Left ventricle myocardium superior (tissue), 1 donor: ENCODE measurements at regions of chr1 and their contacts with region 1.

Region 1: DNA sequence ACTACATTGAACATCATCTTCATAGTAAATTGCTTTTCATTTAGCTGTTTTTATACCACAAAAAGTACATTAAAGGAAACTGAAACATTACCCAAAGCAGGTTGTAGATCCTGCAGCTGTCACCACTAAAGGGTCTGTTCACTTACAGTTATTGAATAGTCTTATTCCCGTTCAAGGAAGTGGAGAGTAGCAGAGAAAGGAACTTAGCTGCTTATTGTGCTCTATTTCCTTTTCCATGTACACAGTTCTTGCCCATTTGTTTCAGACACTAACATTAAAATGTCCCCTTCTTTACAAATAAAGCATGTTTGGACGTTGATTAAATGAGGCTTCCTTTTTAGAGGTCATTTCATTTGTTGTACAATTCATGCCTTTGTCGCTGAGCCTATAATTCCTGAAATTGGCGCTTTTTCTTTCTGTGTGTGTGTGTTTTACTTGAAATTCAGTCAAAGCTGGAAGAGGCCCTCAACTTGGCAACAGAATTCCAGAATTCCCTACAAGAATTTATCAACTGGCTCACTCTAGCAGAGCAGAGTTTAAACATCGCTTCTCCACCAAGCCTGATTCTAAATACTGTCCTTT is 44.4 kb upstream of the BMP8A start:
- DNase-seq: no peak
- ATAC-seq: no peak

Region 2: DNA sequence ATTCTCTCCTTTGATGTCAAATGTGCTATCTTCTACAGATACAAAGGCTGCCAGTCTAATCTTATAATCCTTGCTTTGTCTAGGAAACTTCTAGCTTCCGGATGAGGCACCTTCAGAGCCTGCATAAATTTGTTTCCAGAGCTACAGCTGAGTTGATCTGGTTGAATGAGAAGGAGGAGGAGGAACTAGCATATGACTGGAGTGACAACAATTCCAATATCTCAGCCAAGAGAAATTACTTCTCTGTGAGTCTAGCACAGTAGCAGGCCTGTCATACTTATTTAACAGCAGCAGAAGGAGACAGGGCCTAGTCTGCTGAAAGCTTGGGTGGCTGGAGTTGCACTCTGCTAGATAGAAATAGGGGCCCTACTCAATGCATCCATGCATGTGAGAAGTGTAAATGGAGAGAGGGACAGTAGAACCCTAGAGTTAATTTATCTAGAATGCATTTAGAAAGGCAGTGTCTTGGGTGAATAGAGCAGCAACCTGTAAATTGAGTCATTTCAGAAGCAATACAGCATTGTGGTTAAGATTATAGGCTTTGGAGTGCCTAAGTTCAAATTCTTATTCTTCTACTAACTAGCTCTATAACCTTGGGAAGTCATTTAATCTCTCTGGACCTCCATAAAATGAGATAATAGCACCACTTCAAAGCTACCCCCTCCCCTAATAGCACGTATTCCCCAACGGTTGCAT is 153.6 kb before region 1 on chr1:
- intact Hi-C with region 1: loop called (anchors 10 kb)
- DNase-seq: no peak
- ATAC-seq: peak; percentile 62